ENCODE measurements at regions of chr17 and their contacts with region 1.

Region 1: GRCh38 chr17:30093463-30094147 is 23.0 kb upstream of the NSRP1 start:
- DNase-seq: peak; percentile 49
- ATAC-seq: peak; percentile 83
- H3K4me3 ChIP-seq: no peak overlapping the region
- H3K27ac ChIP-seq: no peak overlapping the region
- H3K4me1 ChIP-seq: peaks cover 10% of the 10 kb centered on the region
- H3K27me3 ChIP-seq: peaks cover 0 to 23% of the 10 kb centered on the region in 2 experiments; a peak in 2 of 5 replicates
- CTCF ChIP-seq: peak; percentile 83
- EP300 ChIP-seq: no peak
- POLR2A ChIP-seq: no peak
- RAD21 ChIP-seq: peak; percentile 76

Region 2: DNA sequence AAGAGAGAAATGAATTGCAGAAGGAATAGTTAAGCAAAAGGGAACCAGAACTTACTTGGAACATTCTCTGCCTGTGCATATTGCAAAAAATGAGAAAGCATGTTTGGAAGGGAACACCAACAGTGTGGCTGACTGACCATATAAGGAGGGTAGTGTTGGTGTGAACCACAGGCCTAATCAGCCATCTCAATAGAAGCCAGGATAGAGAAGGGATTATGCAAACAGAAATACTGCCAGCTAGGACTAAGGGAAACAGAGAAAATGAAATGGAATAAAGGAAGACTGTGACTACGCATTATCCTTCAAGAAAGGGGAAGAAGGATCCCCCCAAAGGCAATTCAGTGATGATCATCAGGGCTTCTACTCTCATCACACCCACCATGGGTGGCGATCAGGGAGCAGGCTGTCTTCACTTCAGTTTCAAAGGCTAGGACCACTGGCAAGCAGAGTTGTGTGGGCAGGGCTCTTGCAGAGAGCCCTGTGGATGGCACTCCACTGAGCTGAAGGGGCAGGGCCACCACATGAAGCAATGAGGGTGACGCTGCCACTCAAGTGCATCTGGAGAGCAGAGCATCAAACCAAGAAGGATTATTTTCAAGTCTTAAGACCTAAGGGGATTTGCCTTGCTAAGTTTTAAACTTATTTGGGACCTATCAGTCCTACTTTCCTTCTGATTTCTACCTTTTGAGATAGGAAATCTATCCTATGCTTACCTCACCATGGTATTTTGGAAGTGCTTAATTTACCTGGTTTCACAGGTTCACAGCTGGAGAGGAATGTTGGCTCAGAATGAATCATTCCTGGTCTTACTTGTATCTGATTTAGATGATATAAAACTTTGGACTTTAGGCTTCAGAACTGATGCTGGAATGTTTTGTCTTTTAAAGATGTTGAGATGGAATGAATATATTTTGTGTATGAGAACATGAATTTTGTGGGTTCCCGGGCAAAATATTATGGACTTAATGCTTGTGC is 304.1 kb before region 1 on chr17:
- CTCF ChIA-PET with region 1: no interaction called
- POLR2A ChIA-PET with region 1: no interaction called
- in situ Hi-C with region 1: no loop called
- intact Hi-C with region 1: no loop called
- DNase-seq: no peak
- ATAC-seq: no peak
- H3K4me3 ChIP-seq: no peak overlapping the region
- H3K27ac ChIP-seq: no peak overlapping the region
- H3K4me1 ChIP-seq: no peaks in the 10 kb centered on the region
- H3K27me3 ChIP-seq: no peaks in the 10 kb centered on the region
- CTCF ChIP-seq: no peak
- EP300 ChIP-seq: no peak
- POLR2A ChIP-seq: no peak
- RAD21 ChIP-seq: no peak

Region 3: GRCh38 chr17:29807520-29808351 is 285.9 kb before region 1 on chr17:
- CTCF ChIA-PET with region 1: no interaction called
- POLR2A ChIA-PET with region 1: no interaction called
- in situ Hi-C with region 1: no loop called
- intact Hi-C with region 1: loop called (anchors 10 kb)
- DNase-seq: peak; percentile 57
- ATAC-seq: peak; percentile 67
- H3K4me3 ChIP-seq: no peak overlapping the region
- H3K27ac ChIP-seq: no peak overlapping the region
- H3K4me1 ChIP-seq: no peaks in the 10 kb centered on the region
- H3K27me3 ChIP-seq: no peaks in the 10 kb centered on the region
- CTCF ChIP-seq: peak; percentile 71
- EP300 ChIP-seq: no peak
- POLR2A ChIP-seq: no peak
- RAD21 ChIP-seq: peak; percentile 56

Region 4: DNA sequence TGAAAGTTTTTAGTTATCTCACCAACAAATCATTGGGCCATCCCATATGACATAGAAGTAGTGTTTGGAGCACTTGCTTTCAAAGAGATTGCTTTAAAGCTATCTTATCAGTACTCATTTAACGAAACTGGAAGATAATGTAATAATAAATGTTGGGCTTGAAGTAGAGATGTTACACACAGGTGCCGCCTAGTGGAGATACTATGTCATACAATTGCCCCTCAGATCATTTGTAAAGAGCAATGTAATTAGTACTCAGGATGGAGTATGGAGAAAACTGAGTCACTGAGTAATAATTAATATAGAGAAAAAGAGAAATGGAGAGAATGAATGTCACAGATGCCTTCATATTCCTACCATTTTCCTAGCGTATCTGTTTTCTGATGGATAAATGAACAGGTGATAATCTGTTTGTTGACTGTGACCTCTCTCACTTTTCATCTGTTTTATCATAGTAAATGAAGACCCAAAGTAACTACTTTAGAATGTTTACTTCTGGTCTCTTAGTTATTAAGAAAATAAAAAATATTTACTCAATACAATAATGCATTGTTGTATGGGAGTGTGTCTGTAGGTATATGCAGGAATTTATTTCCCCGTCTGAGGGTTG is 71.8 kb before region 1 on chr17:
- CTCF ChIA-PET with region 1: interaction called, 20 read pairs
- POLR2A ChIA-PET with region 1: no interaction called
- in situ Hi-C with region 1: loop called (anchors 5 kb)
- intact Hi-C with region 1: loop called (anchors 1 kb)
- DNase-seq: peak; percentile 34
- ATAC-seq: no peak
- H3K4me3 ChIP-seq: no peak overlapping the region
- H3K27ac ChIP-seq: no peak overlapping the region
- H3K4me1 ChIP-seq: no peaks in the 10 kb centered on the region
- H3K27me3 ChIP-seq: no peaks in the 10 kb centered on the region
- CTCF ChIP-seq: peak; percentile 71
- EP300 ChIP-seq: no peak
- POLR2A ChIP-seq: no peak
- RAD21 ChIP-seq: no peak

Region 5: GRCh38 chr17:30027676-30028075 is 65.9 kb before region 1 on chr17:
- CTCF ChIA-PET with region 1: interaction called, 20 read pairs
- POLR2A ChIA-PET with region 1: no interaction called
- in situ Hi-C with region 1: loop called (anchors 5 kb)
- intact Hi-C with region 1: loop called (anchors 1 kb)
- DNase-seq: no peak
- ATAC-seq: no peak
- H3K4me3 ChIP-seq: no peak overlapping the region
- H3K27ac ChIP-seq: no peak overlapping the region
- H3K4me1 ChIP-seq: no peaks in the 10 kb centered on the region
- H3K27me3 ChIP-seq: peaks cover 0 to 3% of the 10 kb centered on the region in 2 experiments; a peak in 2 of 5 replicates
- CTCF ChIP-seq: no peak
- EP300 ChIP-seq: no peak
- POLR2A ChIP-seq: no peak
- RAD21 ChIP-seq: no peak

Measured in HepG2 (cell line).